ENCODE measurements at regions of chr12 and their contacts with region 1.

Region 1: DNA sequence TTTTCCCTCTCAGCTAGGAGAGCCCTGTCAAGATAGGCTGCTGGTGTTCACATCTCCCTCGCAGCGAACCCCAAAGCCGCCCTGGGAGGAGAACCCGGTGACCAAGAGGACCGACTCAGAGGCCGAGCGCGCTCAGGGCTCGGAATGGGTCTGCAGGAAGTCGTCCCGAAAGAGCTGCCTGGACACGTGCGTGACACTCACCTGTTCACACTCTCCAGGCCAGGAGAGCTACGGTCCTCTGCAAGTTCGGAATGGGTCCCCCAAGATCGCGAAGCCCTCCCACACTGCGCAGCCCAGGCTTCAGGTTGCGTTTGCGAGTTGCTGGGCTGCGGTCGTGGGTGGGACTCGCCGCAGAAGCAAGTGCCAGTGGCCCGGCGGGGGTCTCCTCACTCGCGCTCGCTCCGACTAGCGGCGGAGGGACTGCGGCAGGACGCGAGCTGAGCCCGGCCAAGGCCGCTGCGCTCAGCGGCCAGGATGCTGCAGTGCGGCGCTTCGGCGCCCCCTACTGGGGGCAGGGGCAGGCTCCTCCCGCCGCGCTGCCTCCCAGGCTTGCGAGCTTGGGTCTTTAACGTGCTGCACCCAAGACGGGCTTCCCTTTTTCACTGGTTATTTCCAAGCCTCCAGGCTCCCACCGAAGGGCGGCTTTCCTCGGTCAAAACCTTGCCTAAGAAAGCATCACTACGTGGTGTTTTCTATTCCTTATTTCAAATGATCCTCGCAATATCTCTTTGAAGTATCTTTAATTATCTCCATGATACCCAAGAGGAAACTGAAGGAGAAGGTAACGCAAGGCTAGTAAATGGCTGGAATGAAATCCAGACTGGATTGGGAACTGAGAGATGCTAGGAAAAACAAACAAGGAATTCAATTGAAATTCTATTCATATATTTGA is at the start of gene RERG:
- DNase-seq: peak in 1 of 2 donors; percentile 91
- H3K4me3 ChIP-seq: peak within 1 kb of the TSS; percentile 55 to 66
- H3K27ac ChIP-seq: peak within 1 kb of the TSS; percentile 83 to 86
- H3K4me1 ChIP-seq: peaks cover 0 to 9% of the 10 kb centered on the region in 2 donors
- H3K27me3 ChIP-seq: no peaks in the 10 kb centered on the region
- CTCF ChIP-seq: peak; percentile 98 to 100 (median 99)
- total RNA-seq, gene RERG: 55.7 TPM

Region 2: DNA sequence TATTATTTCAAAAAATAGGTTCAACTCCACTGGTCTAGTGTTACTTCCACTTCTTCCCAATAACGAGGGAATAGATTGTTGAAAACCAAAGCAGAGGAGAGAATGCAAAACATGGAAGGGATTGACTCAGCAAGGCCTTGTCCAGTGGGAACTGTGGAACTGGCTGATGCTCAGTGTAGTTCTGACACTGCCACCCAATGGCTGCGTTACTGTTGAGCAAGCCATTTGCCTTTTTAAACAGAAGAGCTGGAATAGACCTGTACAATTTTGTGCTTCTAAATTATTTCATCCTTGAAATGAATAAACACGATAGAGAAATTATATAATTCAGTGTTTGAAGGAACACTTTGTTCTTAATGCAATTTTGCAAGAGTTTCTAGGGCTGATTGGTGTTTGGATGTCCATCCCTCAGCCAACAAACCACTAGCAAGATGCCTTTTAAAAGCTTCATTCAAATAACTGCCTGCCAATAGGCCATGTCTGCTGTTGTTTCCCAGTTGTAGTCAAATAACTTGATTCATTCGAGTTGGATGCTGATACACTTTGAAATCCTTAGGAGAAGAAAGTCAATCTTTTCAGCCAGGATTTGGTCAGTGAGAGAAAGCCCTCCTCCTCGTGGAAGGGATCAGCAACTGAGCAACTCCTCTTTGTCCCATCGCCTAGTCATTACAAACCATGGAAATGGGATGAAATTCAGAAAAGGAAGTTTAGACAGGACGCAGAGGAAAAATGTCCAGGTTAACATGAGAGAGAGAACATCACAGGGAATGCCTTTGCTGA is 328.3 kb before region 1 on chr12:
- intact Hi-C with region 1: loop called (anchors 5 kb)
- DNase-seq: peak; percentile 25 to 86
- H3K4me3 ChIP-seq: peak overlapping the region in 1 of 2 donors; percentile 33
- H3K27ac ChIP-seq: peak overlapping the region; percentile 85 to 88
- H3K4me1 ChIP-seq: peaks cover 7 to 28% of the 10 kb centered on the region in 2 donors
- H3K27me3 ChIP-seq: no peaks in the 10 kb centered on the region
- CTCF ChIP-seq: peak in 2 of 3 experiments; percentile 18 to 20

Region 3: GRCh38 chr12:14995583-14996425 is 225.4 kb before region 1 on chr12:
- intact Hi-C with region 1: loop called (anchors 2 kb)
- DNase-seq: no peak
- H3K4me3 ChIP-seq: no peak overlapping the region
- H3K27ac ChIP-seq: no peak overlapping the region
- H3K4me1 ChIP-seq: peaks cover 0 to 6% of the 10 kb centered on the region in 2 donors
- H3K27me3 ChIP-seq: no peaks in the 10 kb centered on the region
- CTCF ChIP-seq: peak; percentile 56 to 68 (median 58)

Region 4: DNA sequence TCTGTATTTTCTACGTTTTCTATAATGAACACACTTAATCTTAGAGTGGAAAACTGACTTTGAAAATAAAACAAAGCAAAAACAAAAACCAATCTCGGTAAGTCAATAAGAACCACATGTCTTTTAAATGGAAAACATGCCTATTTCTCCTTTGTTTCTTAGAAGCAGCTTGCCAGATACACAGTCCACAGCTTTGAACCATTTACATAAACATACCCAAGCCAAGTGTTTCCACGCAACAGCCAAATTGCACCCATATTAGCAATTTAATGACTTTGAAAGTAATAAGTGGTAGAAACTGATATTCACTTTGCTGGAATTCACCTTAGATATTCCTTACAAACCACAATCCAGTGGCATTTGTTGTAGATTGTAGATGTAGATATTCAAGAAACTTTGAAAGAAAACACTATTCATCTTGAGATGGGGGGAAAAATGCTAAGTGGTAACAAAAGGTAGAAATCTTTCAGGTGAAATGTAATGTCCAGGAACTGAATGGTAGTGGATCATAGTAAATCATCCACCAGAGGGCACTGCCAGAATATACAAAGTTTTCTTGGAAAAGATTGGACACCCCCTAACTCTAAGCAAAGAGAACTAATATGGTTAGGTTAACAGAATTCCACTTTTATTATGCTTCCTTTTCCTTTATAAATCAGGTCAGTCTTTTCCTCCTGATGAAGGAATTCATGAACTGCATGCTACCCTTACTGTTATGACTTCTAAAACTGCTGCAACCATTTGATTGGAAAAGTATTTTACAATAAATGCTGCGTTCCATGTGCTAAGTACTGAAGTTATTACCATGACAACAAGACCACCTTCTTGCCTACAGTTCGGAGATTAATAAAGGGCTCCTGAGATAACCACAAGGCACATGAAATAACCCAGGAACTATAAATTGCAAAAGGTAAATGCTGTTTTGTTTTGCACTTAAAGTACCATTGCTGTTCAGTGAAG is 69.8 kb before region 1 on chr12:
- intact Hi-C with region 1: loop called (anchors 1 kb)
- DNase-seq: no peak
- H3K4me3 ChIP-seq: peak overlapping the region in 1 of 2 donors; percentile 42
- H3K27ac ChIP-seq: peak overlapping the region; percentile 74 to 81
- H3K4me1 ChIP-seq: peaks cover 23 to 41% of the 10 kb centered on the region in 2 donors
- H3K27me3 ChIP-seq: no peaks in the 10 kb centered on the region
- CTCF ChIP-seq: peak; percentile 35 to 59 (median 48)

Region 5: DNA sequence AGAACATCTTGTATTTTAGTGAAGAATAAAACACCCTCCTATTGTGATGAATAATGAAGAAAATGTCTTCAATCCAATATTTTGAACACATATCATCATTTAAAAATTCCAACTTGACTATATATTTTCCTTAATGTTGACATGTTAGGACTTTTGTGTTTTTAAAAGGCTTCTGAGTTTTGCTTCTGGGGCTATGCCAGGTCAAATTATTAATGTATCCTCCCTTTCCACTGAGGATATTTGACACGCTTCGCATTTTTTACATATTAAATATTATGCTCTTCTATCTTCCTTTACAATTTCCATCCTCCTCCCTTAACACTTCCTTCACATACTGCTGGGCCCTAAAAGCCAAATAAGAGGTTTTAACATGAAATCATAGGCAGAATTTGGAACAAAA is 20.6 kb before region 1 on chr12:
- intact Hi-C with region 1: loop called (anchors 2 kb)
- DNase-seq: no peak
- H3K4me3 ChIP-seq: no peak overlapping the region
- H3K27ac ChIP-seq: peak overlapping the region; percentile 68 to 69
- H3K4me1 ChIP-seq: peaks cover 7 to 52% of the 10 kb centered on the region in 2 donors
- H3K27me3 ChIP-seq: no peaks in the 10 kb centered on the region
- CTCF ChIP-seq: no peak

Region 6: GRCh38 chr12:15522565-15523187 is 301.4 kb after region 1 on chr12:
- intact Hi-C with region 1: loop called (anchors 2 kb)
- DNase-seq: no peak
- H3K4me3 ChIP-seq: no peak overlapping the region
- H3K27ac ChIP-seq: no peak overlapping the region
- H3K4me1 ChIP-seq: no peaks in the 10 kb centered on the region
- H3K27me3 ChIP-seq: no peaks in the 10 kb centered on the region
- CTCF ChIP-seq: peak; percentile 53 to 64 (median 55)

Region 7: DNA sequence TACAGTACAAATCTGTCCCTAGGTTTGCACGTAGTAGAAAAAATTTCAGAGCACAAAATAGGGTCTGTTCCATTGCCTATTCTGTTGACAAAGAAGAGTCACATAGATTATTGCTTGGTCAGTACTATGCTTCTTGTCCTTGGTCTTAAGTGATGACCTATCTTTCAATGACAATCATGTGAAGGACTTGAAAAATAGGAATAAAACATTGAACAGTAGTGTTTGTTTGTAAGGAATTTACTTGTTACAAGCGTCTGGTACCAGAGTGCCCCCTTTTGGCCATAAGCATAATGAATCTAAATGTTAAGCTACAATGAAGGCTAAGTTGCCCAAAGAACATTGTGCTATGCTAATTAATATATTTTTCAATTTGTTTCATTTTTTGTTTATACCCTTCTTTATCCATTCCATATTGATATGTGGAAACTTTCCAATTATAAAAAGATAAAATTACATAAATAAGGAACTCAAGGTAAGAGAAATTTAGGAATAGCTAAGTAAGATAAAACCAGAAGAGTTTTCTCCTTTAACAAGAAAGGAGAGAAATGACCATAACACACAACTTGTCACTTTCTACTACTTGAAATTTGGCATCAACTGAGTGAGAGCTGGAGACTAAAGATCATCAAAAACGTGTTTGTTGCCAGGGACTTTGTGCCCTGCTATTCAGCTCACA is 363.3 kb after region 1 on chr12:
- intact Hi-C with region 1: loop called (anchors 5 kb)
- DNase-seq: no peak
- H3K4me3 ChIP-seq: no peak overlapping the region
- H3K27ac ChIP-seq: no peak overlapping the region
- H3K4me1 ChIP-seq: no peaks in the 10 kb centered on the region
- H3K27me3 ChIP-seq: no peaks in the 10 kb centered on the region
- CTCF ChIP-seq: peak; percentile 60 to 77 (median 64)

Region 8: GRCh38 chr12:15899282-15899870 is 678.1 kb after region 1 on chr12:
- intact Hi-C with region 1: no loop called
- DNase-seq: no peak
- H3K4me3 ChIP-seq: no peak overlapping the region
- H3K27ac ChIP-seq: no peak overlapping the region
- H3K4me1 ChIP-seq: no peaks in the 10 kb centered on the region
- H3K27me3 ChIP-seq: no peaks in the 10 kb centered on the region
- CTCF ChIP-seq: peak; percentile 36 to 64 (median 60)

Measured in ascending aorta (tissue), 2 donors.